GM18951 (cell line): ENCODE measurements at regions of chr21 and their contacts with region 1.

Region 1: DNA sequence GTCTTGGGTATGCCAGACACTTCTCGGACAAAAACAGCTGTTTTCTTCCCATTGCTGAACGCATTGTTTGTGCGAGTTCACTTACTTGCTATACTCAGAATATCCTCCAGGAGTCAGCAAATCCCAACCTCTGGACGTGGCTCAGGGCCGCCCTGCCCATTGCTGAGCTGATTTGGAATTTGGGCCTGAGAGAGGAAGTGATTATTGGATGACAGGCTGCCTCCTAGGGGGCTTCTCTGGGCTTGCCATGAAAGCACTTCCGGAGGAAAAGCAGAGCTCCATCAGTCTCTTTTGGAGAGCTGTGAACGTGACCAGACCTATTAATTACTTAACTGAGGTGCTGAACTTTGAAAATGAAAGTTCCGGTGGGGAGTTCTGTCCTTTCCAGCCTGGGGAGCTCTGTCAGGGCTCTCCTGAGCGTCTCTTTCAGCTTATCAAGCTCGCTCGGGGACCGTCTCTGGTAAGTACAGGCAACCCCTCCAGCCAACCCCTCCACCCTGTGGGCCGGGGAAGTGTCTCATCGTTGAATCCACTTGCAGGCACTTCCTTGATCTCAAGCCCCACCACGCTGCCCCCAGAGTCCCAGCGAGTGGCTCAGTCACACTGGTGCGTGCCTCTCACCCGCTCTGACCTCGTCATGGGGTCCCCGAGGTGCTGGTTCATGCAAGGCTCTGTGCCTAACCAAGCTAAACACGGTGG is 76.9 kb downstream of the CLIC6 start:
- POLR2A ChIP-seq: no peak

Region 2: DNA sequence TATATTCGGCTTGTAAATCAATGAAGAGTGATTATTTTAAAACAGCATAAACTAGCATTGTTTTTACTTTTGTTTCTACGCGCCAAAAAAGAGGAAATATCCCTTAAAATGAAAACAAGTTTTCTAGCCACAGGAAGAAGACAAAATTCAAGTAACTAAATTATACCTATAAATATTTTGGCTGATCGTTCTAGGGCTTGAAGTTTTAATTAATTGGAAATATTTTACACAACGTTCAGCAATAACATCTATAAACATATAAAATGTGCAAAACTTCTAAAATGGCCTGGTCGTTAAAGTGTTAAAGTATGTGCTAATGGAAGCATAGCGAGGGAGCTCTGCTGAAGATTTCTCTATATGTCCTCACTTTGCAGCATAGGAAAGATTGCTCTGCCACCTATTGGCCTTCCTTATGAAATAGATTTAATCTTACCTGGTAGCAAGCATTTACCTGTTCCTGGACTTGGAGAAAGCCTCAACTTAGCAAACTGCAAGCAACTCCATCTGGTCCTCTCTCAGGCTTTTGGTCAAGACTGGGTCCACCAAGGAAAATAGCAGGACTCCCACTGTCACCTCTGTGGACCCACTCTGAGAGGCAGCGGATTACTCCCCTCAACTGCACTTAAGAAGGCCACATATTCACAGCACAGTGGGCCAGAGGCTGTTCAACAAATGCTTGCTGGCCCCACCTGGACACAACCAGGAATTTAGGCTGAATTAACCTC is 654.7 kb after region 1 on chr21:
- in situ Hi-C with region 1: loop called (anchors 10 kb)
- POLR2A ChIP-seq: no peak

Region 3: GRCh38 chr21:35840197-35840799 is 1094.6 kb after region 1 on chr21:
- in situ Hi-C with region 1: loop called (anchors 25 kb)
- POLR2A ChIP-seq: no peak